Ascending aorta (tissue), 2 donors: ENCODE measurements at regions of chr6 and their contacts with region 1.

Region 1: GRCh38 chr6:29792123-29793035 is 35.2 kb upstream of the HLA-G start:
- DNase-seq: peak in 1 of 2 donors; percentile 77
- H3K4me3 ChIP-seq: peak overlapping the region; percentile 67 to 69
- H3K27ac ChIP-seq: no peak overlapping the region
- H3K4me1 ChIP-seq: no peaks in the 10 kb centered on the region
- H3K27me3 ChIP-seq: no peaks in the 10 kb centered on the region
- CTCF ChIP-seq: peak; percentile 66 to 92 (median 66)

Region 2: GRCh38 chr6:29723262-29723665 is 69.1 kb before region 1 on chr6 and contains the start of gene HLA-F:
- intact Hi-C with region 1: loop called (anchors 5 kb)
- DNase-seq: peak; percentile 81 to 96
- H3K4me3 ChIP-seq: peak within 1 kb of the TSS; percentile 85 to 94
- H3K27ac ChIP-seq: peak within 1 kb of the TSS; percentile 87 to 93
- H3K4me1 ChIP-seq: peaks cover 12 to 13% of the 10 kb centered on the region in 2 donors
- H3K27me3 ChIP-seq: no peaks in the 10 kb centered on the region
- CTCF ChIP-seq: no peak
- total RNA-seq, gene HLA-F: 75.0 TPM

Region 3: GRCh38 chr6:29737707-29738630 is 54.4 kb before region 1 on chr6:
- intact Hi-C with region 1: loop called (anchors 5 kb)
- DNase-seq: peak in 1 of 2 donors; percentile 76
- H3K4me3 ChIP-seq: no peak overlapping the region
- H3K27ac ChIP-seq: no peak overlapping the region
- H3K4me1 ChIP-seq: no peaks in the 10 kb centered on the region
- H3K27me3 ChIP-seq: no peaks in the 10 kb centered on the region
- CTCF ChIP-seq: peak; percentile 61 to 72 (median 72)